ENCODE measurements at regions of chr17 and their contacts with region 1.

Region 1: GRCh38 chr17:29180034-29180787 is at the start of gene MYO18A:
- DNase-seq: peak; percentile 89
- H3K4me3 Mint-ChIP-seq: peak within 1 kb of the TSS; percentile 69
- H3K27ac Mint-ChIP-seq: peak within 1 kb of the TSS; percentile 87
- H3K4me1 Mint-ChIP-seq: peaks cover 38% of the 10 kb centered on the region
- H3K27me3 Mint-ChIP-seq: no peaks in the 10 kb centered on the region
- CTCF ChIP-seq: peak; percentile 92
- total RNA-seq, gene MYO18A: 89.9 and 123 TPM in 2 replicates

Region 2: GRCh38 chr17:29155227-29155965 is 24.8 kb before region 1 on chr17:
- CTCF ChIA-PET with region 1: interaction called, 158 read pairs
- intact Hi-C with region 1: loop called (anchors 2 kb)
- DNase-seq: peak; percentile 79
- H3K4me3 Mint-ChIP-seq: peak overlapping the region; percentile 59
- H3K27ac Mint-ChIP-seq: peak overlapping the region; percentile 95
- H3K4me1 Mint-ChIP-seq: peaks cover 94% of the 10 kb centered on the region
- H3K27me3 Mint-ChIP-seq: no peaks in the 10 kb centered on the region
- CTCF ChIP-seq: no peak

Measured in Calu3 (cell line).